ENCODE measurements at regions of chr12 and their contacts with region 1.

Region 1: DNA sequence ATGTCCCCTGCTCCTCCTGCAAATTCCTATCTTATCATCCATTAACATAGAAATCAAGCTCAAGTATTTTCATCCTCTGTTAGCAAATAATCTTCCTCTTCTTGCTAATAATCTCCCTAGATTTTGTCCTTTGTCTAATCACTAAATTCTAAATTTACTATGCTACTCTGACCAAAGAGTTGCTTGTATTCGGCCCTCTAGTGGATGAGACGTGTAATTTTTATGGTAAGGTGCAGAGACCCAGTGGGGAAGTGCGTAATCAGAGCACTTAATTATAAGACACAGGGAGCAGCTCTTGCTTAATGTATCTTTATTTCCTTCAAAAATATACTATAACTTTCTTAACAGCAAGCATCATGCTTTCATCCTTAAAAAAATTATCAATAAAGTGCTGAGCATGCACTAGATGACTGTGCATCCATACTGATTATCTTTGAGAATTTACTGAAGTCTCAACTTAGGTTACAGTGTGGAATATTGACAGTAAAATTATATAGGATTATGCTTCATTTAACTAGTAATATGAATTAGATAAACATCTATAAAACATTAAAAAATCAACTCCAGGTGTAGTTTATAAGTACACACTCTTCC is 212.6 kb downstream of the SLC16A7 start:
- DNase-seq: peak; percentile 45 to 70 (median 69)
- H3K4me3 ChIP-seq: no peak overlapping the region
- H3K27ac ChIP-seq: no peak overlapping the region
- H3K4me1 ChIP-seq: no peaks in the 10 kb centered on the region
- H3K27me3 ChIP-seq: no peaks in the 10 kb centered on the region

Region 2: GRCh38 chr12:59444932-59445331 is 363.5 kb before region 1 on chr12:
- CTCF ChIA-PET with region 1: interaction called, 11 read pairs
- POLR2A ChIA-PET with region 1: no interaction called
- DNase-seq: peak; percentile 34 to 56 (median 55)
- H3K4me3 ChIP-seq: no peak overlapping the region
- H3K27ac ChIP-seq: no peak overlapping the region
- H3K4me1 ChIP-seq: peaks cover 0 to 2% (median 0%) of the 10 kb centered on the region in 4 experiments
- H3K27me3 ChIP-seq: no peaks in the 10 kb centered on the region

Region 3: GRCh38 chr12:59768031-59768430 is 40.4 kb before region 1 on chr12:
- CTCF ChIA-PET with region 1: no interaction called
- POLR2A ChIA-PET with region 1: no interaction called
- DNase-seq: no peak
- H3K4me3 ChIP-seq: no peak overlapping the region
- H3K27ac ChIP-seq: no peak overlapping the region
- H3K4me1 ChIP-seq: no peaks in the 10 kb centered on the region
- H3K27me3 ChIP-seq: no peaks in the 10 kb centered on the region